ENCODE measurements at regions of chr4 and their contacts with region 1.

Region 1: DNA sequence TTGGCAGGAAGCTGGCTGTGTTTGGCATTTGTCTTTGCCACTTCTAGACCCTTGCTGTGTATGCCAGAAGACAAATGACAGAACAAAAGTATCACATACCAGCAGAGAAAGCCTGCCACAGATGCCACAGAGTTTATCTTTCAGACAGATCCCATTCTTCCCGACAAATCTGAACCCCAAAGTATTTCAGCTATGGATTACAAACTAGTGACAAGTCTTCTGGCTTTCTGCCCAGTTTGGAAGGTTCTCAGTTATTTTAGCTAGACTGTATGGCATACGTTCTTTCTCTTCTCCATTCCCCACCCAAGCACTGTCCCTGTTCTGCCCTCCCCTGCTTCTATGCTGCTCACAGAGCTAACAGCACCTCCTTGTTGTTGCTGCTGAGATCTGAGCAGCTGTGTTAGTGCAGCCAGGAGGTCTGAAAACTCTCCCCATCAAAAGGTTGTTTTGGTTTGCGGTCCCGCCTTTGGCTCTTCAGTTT is 236.7 kb downstream of the FRAS1 start:
- DNase-seq: peak; percentile 74
- ATAC-seq: peak; percentile 84
- H3K4me3 ChIP-seq: no peak overlapping the region
- H3K27ac ChIP-seq: no peak overlapping the region
- H3K4me1 ChIP-seq: peaks cover 7% of the 10 kb centered on the region; the same call in 1 of the 2 replicates
- H3K27me3 ChIP-seq: peaks cover 5% of the 10 kb centered on the region
- CTCF ChIP-seq: no peak
- POLR2A ChIP-seq: no peak
- RAD21 ChIP-seq: no peak

Region 2: GRCh38 chr4:78320349-78320935 is 26.6 kb after region 1 on chr4:
- CTCF ChIA-PET with region 1: no interaction called
- POLR2A ChIA-PET with region 1: no interaction called
- dilution Hi-C with region 1: no loop called
- in situ Hi-C with region 1: no loop called
- intact Hi-C with region 1: loop called (anchors 2 kb)
- DNase-seq: no peak
- ATAC-seq: no peak
- H3K4me3 ChIP-seq: no peak overlapping the region
- H3K27ac ChIP-seq: no peak overlapping the region
- H3K4me1 ChIP-seq: no peaks in the 10 kb centered on the region
- H3K27me3 ChIP-seq: peaks cover 7% of the 10 kb centered on the region
- CTCF ChIP-seq: no peak
- POLR2A ChIP-seq: no peak
- RAD21 ChIP-seq: no peak